ENCODE measurements at regions of chr6 and their contacts with region 1.

Region 1: GRCh38 chr6:143575440-143575839 is 63.9 kb upstream of the FUCA2 start:
- DNase-seq: peak; percentile 73
- ATAC-seq: peak; percentile 93
- H3K4me3 ChIP-seq: no peak overlapping the region
- H3K27ac ChIP-seq: peak overlapping the region; percentile 58; the same call in 1 of the 2 replicates
- H3K4me1 ChIP-seq: peaks cover 8% of the 10 kb centered on the region; the same call in 1 of the 2 replicates
- H3K27me3 ChIP-seq: no peaks in the 10 kb centered on the region
- CTCF ChIP-seq: peak; percentile 83

Region 2: GRCh38 chr6:143196525-143197215 is 378.8 kb before region 1 on chr6:
- CTCF ChIA-PET with region 1: no interaction called
- POLR2A ChIA-PET with region 1: no interaction called
- in situ Hi-C with region 1: no loop called
- intact Hi-C with region 1: no loop called
- DNase-seq: no peak
- ATAC-seq: no peak
- H3K4me3 ChIP-seq: no peak overlapping the region
- H3K27ac ChIP-seq: no peak overlapping the region
- H3K4me1 ChIP-seq: no peaks in the 10 kb centered on the region
- H3K27me3 ChIP-seq: no peaks in the 10 kb centered on the region
- CTCF ChIP-seq: no peak

Region 3: DNA sequence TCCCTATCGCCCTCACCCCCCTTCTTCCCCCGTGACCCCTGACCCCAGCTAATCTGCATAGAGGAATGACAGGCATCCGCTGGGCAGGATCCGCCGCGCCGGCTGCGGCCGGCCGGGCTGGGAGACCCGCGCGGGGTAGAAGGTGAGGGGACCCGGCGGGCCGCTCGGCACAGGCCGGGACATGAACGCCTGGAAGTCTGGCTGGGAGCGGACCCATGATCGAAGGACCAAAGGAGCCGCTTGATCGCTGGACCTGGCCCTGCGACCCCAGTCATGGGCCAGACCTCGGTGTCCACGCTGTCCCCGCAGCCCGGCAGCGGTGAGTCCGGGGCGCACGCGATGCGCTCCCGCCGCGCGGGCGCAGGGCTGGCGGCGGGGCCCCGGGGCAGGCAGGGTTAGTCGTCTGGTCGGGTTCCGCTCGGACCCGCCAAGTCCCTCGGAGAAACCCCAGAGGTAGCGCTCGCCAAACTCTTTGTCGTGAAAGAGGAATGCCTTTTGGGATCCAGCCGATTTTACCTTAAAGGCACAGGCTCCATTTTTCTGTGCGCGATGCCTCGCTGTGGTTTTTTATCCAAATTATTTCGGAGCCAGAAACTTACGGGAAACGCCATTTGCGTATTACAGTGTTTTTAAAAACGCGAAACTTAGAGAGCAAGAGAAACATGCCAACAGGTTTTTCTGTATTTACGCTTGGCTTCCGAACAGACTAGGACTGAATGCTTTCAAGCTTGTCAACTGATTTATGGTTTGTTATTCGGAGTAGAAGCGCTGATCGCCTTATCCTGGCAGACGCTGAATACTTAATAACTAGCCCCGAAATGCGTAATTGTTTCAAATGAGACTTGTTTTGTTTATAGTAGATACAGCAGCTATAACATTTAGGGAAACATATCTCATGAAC is 102.7 kb after region 1 on chr6 and contains the start of gene PHACTR2:
- CTCF ChIA-PET with region 1: no interaction called
- POLR2A ChIA-PET with region 1: no interaction called
- in situ Hi-C with region 1: no loop called
- intact Hi-C with region 1: loop called (anchors 5 kb)
- DNase-seq: peak; percentile 5
- ATAC-seq: peak; percentile 96
- H3K4me3 ChIP-seq: peak within 1 kb of the TSS; percentile 79 to 84
- H3K27ac ChIP-seq: peak within 1 kb of the TSS; percentile 96
- H3K4me1 ChIP-seq: peaks cover 43% of the 10 kb centered on the region
- H3K27me3 ChIP-seq: no peaks in the 10 kb centered on the region
- CTCF ChIP-seq: no peak
- total RNA-seq, gene PHACTR2: 59.9 TPM

Region 4: DNA sequence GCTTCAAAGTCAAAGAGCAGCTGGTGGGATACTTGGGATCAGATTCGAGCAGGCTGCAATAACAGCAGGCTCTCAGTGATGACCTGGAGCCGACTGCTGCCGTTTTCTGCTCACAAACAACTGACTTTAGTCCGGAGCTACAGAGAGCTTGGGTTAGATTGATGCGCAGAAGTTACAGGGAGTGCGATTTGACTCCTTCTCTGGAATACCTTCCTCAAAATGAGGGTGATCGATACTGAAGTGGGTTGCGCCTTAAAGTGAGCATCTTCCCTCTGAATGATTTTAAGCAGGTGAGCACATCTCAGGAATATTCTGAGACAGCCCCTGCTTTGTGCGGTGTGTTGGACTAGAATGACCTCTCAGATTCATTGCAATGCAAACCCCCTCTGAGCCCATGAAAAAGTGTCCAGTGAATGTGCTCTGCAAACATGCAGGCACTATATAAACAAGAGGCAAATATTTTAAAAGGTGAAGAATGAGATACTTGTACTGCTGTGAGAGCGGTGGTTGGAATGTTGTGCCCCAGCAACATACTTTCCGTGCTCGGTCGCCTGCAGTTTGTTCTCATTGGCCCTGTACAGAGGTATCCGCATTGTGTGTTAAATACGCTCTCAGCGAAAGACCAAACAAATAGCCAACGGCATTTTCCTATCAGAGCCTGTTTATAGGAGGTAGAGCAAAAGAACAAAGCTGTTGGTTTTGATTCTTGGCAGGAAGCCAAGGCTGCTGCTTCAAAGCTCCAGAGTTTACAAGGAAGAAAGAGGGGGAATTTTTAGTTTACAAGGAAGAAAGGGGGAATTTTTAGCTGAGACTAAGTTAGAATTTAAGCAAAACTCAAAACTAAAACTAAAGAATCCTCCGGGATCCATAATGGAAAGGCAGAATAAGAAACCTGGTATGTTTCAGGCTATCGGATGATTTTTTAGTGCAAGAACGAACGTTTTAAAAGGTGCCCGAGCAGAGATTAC is 170.0 kb after region 1 on chr6:
- CTCF ChIA-PET with region 1: no interaction called
- POLR2A ChIA-PET with region 1: no interaction called
- in situ Hi-C with region 1: no loop called
- intact Hi-C with region 1: loop called (anchors 10 kb)
- DNase-seq: no peak
- ATAC-seq: peak; percentile 93
- H3K4me3 ChIP-seq: peak overlapping the region; percentile 31 to 51
- H3K27ac ChIP-seq: peak overlapping the region; percentile 99
- H3K4me1 ChIP-seq: peaks cover 66% of the 10 kb centered on the region
- H3K27me3 ChIP-seq: no peaks in the 10 kb centered on the region
- CTCF ChIP-seq: no peak

Region 5: GRCh38 chr6:143842902-143843676 is 267.6 kb after region 1 on chr6 and contains the start of gene LTV1:
- CTCF ChIA-PET with region 1: interaction called, 7 read pairs
- POLR2A ChIA-PET with region 1: no interaction called
- in situ Hi-C with region 1: no loop called
- intact Hi-C with region 1: loop called (anchors 5 kb)
- DNase-seq: peak; percentile 72
- ATAC-seq: peak; percentile 100
- H3K4me3 ChIP-seq: peak within 1 kb of the TSS; percentile 89
- H3K27ac ChIP-seq: peak within 1 kb of the TSS; percentile 96
- H3K4me1 ChIP-seq: 0 out of 2 replicates have a peak, but pooled peaks cover 6% of the 10 kb centered on the region
- H3K27me3 ChIP-seq: no peaks in the 10 kb centered on the region
- CTCF ChIP-seq: no peak
- total RNA-seq, gene LTV1: 46.8 TPM

Region 6: DNA sequence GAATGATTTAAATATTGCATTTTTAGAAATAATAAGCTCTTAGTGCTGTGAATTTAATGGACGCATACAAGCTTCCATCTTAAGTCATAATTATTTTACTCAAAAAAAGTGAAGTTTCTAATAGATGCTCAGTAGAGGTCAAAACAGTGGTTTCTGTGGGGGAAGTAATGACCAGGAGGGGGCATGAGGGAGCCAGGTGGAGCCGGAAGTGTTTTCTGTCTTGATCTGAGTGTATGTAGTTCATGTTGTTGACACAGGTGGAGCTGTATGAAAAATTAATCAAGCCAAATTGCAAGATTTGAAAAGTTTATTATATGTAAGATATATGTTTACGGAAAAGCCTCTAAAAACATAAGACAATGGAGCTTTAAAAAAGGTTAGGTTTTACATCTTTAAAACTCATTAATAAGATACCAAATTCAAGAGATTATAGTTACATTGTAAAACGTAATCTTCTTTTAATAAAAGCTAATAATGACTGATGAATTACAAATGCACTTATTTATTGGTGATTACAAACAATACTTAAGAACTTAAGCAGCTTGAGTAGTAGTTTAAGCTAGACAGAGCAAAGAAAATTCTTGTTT is 364.7 kb after region 1 on chr6:
- CTCF ChIA-PET with region 1: interaction called, 4 read pairs
- POLR2A ChIA-PET with region 1: no interaction called
- in situ Hi-C with region 1: no loop called
- intact Hi-C with region 1: loop called (anchors 10 kb)
- DNase-seq: peak; percentile 28
- ATAC-seq: peak; percentile 64; the same call in 1 of the 2 replicates
- H3K4me3 ChIP-seq: no peak overlapping the region
- H3K27ac ChIP-seq: no peak overlapping the region
- H3K4me1 ChIP-seq: no peaks in the 10 kb centered on the region
- H3K27me3 ChIP-seq: peaks cover 7% of the 10 kb centered on the region; the same call in 1 of the 2 replicates
- CTCF ChIP-seq: peak; percentile 87

Region 7: DNA sequence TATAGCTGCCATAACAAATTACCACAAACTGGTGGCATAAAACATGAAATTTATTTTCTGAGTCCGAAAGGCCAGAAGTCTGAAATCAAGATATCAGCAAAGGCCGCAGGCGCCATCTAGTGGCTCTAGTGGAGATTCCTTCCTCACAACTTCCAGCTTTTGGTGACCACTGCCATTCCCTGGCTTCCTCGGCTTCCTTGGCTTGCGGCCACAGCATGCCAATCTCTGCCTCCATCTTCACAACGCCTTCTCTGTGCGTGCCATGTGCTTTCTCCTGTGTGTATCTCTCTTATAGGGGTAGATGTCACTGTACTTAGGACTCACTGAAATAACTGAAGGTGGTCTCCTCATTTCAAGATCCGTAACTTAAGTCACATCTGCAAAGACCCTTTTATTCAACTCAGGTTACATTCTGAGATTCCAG is 438.1 kb after region 1 on chr6:
- CTCF ChIA-PET with region 1: interaction called, 5 read pairs
- POLR2A ChIA-PET with region 1: no interaction called
- in situ Hi-C with region 1: no loop called
- intact Hi-C with region 1: loop called (anchors 1 kb)
- DNase-seq: peak; percentile 36
- ATAC-seq: peak; percentile 85
- H3K4me3 ChIP-seq: no peak overlapping the region
- H3K27ac ChIP-seq: no peak overlapping the region
- H3K4me1 ChIP-seq: no peaks in the 10 kb centered on the region
- H3K27me3 ChIP-seq: peaks cover 7% of the 10 kb centered on the region
- CTCF ChIP-seq: peak; percentile 95

Measured in Panc1 (cell line).